MCF 10A (cell line): ENCODE measurements at regions of chr9 and their contacts with region 1.

Region 1: GRCh38 chr9:38388283-38389223 is 3.9 kb upstream of the ALDH1B1 start:
- DNase-seq: peak; percentile 48
- H3K4me3 Mint-ChIP-seq: no peak overlapping the region
- H3K27ac Mint-ChIP-seq: no peak overlapping the region
- H3K4me1 Mint-ChIP-seq: peaks cover 13% of the 10 kb centered on the region
- H3K27me3 Mint-ChIP-seq: no peaks in the 10 kb centered on the region
- CTCF ChIP-seq: no peak

Region 2: GRCh38 chr9:37046683-37047082 is 1341.9 kb before region 1 on chr9:
- CTCF ChIA-PET with region 1: interaction called, 10 read pairs
- POLR2A ChIA-PET with region 1: no interaction called
- intact Hi-C with region 1: no loop called
- DNase-seq: no peak
- H3K4me3 Mint-ChIP-seq: no peak overlapping the region
- H3K27ac Mint-ChIP-seq: no peak overlapping the region
- H3K4me1 Mint-ChIP-seq: no peaks in the 10 kb centered on the region
- H3K27me3 Mint-ChIP-seq: peaks cover 88% of the 10 kb centered on the region
- CTCF ChIP-seq: no peak